ENCODE measurements at regions of chr1 and their contacts with region 1.

Region 1: GRCh38 chr1:163796373-163796836 is 474.7 kb downstream of the NUF2 start:
- DNase-seq: no peak
- ATAC-seq: no peak
- H3K4me3 ChIP-seq: no peak overlapping the region
- H3K27ac ChIP-seq: no peak overlapping the region
- H3K4me1 ChIP-seq: no peaks in the 10 kb centered on the region
- H3K27me3 ChIP-seq: no peaks in the 10 kb centered on the region
- CTCF ChIP-seq: no peak

Region 2: DNA sequence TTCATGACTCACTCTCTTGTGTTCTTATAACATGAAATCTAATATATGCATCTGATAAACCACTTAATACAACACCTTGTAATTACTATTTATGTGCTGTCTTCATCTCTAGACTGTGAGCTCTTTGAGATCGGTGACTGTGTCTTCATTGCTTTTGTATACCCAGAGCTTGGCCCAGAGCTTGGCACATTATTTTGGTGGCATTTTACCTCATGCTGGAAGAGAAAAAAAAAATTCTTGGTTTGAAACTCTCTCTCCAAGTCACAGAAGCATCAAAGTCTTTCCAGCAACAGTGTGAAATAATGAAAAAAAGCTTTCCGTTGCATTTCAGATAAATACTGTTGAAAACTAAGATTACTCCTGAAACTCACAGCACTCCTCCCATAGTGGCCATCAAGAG is 23.0 kb before region 1 on chr1:
- intact Hi-C with region 1: loop called in 1 of 2 experiments (anchors 1 kb)
- DNase-seq: no peak
- ATAC-seq: no peak
- H3K4me3 ChIP-seq: no peak overlapping the region
- H3K27ac ChIP-seq: no peak overlapping the region
- H3K4me1 ChIP-seq: no peaks in the 10 kb centered on the region
- H3K27me3 ChIP-seq: no peaks in the 10 kb centered on the region
- CTCF ChIP-seq: no peak

Region 3: GRCh38 chr1:163844459-163844858 is 48.1 kb after region 1 on chr1:
- intact Hi-C with region 1: no loop called
- DNase-seq: no peak
- ATAC-seq: peak; percentile 57 to 82 (median 81)
- H3K4me3 ChIP-seq: no peak overlapping the region
- H3K27ac ChIP-seq: peak overlapping the region; percentile 62
- H3K4me1 ChIP-seq: no peaks in the 10 kb centered on the region
- H3K27me3 ChIP-seq: no peaks in the 10 kb centered on the region
- CTCF ChIP-seq: no peak

Measured in psoas muscle (tissue), 8 donors.